CD4-positive, alpha-beta T cell (primary cell): ENCODE measurements at regions of chr7 and their contacts with region 1.

Region 1: DNA sequence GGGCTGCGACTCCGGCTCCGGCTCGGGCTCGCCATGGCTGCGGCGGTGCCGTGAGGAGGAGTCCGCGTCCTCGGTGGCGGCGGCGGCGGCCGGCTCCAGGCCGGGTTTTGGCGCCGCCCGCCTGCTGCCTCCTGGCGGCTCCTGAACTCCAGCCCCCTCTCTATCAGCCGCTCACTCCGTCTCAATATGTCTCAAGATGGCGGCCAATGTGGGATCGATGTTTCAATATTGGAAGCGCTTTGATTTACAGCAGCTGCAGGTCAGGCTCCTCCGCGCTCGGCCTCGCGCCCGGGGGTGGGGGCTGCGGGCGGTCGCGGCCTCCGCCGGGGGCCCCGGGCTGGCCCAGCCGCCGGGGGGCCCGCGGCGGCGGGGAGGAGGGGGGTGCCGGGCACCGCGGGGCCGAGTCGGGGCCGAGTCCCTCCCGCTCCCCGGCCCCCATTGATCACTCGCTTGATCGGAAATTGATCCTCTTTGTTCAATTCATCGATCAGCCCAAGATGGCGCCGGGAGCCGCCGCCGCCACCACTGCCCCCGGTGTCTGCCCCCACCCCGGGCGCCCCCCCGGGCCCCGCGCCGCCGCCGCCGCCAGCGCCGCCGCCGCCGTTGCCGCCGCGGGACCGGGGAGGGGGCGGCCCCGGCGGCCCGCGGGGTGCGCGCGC is 1.5 kb upstream of the CUX1 start:
- DNase-seq: peak; percentile 48 to 89 (median 64)
- ATAC-seq: peak; percentile 81
- H3K4me3 ChIP-seq: peak overlapping the region; percentile 57
- H3K4me3 Mint-ChIP-seq: peak overlapping the region; percentile 90
- H3K27ac ChIP-seq: no peak overlapping the region
- H3K27ac Mint-ChIP-seq: peak overlapping the region; percentile 51
- H3K4me1 ChIP-seq: peaks cover 16% of the 10 kb centered on the region
- H3K4me1 Mint-ChIP-seq: peaks cover 35% of the 10 kb centered on the region
- H3K27me3 ChIP-seq: no peaks in the 10 kb centered on the region
- H3K27me3 Mint-ChIP-seq: peaks cover 5% of the 10 kb centered on the region
- CTCF ChIP-seq: no peak

Region 2: GRCh38 chr7:101743241-101743994 is 72.5 kb before region 1 on chr7:
- CTCF ChIA-PET with region 1: interaction called, 12 read pairs
- POLR2A ChIA-PET with region 1: interaction called, 24 read pairs
- intact Hi-C with region 1: loop called (anchors 1 kb)
- DNase-seq: peak; percentile 42 to 78 (median 62)
- ATAC-seq: peak; percentile 87
- H3K4me3 ChIP-seq: peak overlapping the region; percentile 57
- H3K4me3 Mint-ChIP-seq: peak overlapping the region; percentile 83
- H3K27ac ChIP-seq: no peak overlapping the region
- H3K27ac Mint-ChIP-seq: no peak overlapping the region
- H3K4me1 ChIP-seq: peaks cover 30% of the 10 kb centered on the region
- H3K4me1 Mint-ChIP-seq: peaks cover 6% of the 10 kb centered on the region
- H3K27me3 ChIP-seq: peaks cover 0 to 2% of the 10 kb centered on the region in 2 experiments
- H3K27me3 Mint-ChIP-seq: no peaks in the 10 kb centered on the region
- CTCF ChIP-seq: peak; percentile 71

Region 3: GRCh38 chr7:101856473-101857357 is 40.8 kb after region 1 on chr7:
- CTCF ChIA-PET with region 1: interaction called, 7 read pairs
- POLR2A ChIA-PET with region 1: interaction called, 4 read pairs
- intact Hi-C with region 1: loop called (anchors 2 kb)
- DNase-seq: peak; percentile 53 to 93 (median 72)
- ATAC-seq: peak; percentile 94
- H3K4me3 ChIP-seq: peak overlapping the region; percentile 60
- H3K4me3 Mint-ChIP-seq: peak overlapping the region; percentile 97
- H3K27ac ChIP-seq: peak overlapping the region; percentile 64 to 83
- H3K27ac Mint-ChIP-seq: peak overlapping the region; percentile 95
- H3K4me1 ChIP-seq: peaks cover 21% of the 10 kb centered on the region
- H3K4me1 Mint-ChIP-seq: peaks cover 62% of the 10 kb centered on the region
- H3K27me3 ChIP-seq: no peaks in the 10 kb centered on the region
- H3K27me3 Mint-ChIP-seq: no peaks in the 10 kb centered on the region
- CTCF ChIP-seq: peak; percentile 63